ENCODE measurements at regions of chr2 and their contacts with region 1.

Region 1: GRCh38 chr2:37005118-37005868 is 39.0 kb upstream of the STRN start:
- DNase-seq: peak; percentile 23
- ATAC-seq: no peak
- H3K4me3 ChIP-seq: no peak overlapping the region
- H3K27ac ChIP-seq: no peak overlapping the region
- H3K4me1 ChIP-seq: peaks cover 2% of the 10 kb centered on the region; the same call in 1 of the 2 replicates
- H3K27me3 ChIP-seq: no peaks in the 10 kb centered on the region
- CTCF ChIP-seq: 0 out of 2 replicates have a peak, but pooled peaks have one; percentile 21
- POLR2A ChIP-seq: no peak
- RAD21 ChIP-seq: peak; percentile 36

Region 2: DNA sequence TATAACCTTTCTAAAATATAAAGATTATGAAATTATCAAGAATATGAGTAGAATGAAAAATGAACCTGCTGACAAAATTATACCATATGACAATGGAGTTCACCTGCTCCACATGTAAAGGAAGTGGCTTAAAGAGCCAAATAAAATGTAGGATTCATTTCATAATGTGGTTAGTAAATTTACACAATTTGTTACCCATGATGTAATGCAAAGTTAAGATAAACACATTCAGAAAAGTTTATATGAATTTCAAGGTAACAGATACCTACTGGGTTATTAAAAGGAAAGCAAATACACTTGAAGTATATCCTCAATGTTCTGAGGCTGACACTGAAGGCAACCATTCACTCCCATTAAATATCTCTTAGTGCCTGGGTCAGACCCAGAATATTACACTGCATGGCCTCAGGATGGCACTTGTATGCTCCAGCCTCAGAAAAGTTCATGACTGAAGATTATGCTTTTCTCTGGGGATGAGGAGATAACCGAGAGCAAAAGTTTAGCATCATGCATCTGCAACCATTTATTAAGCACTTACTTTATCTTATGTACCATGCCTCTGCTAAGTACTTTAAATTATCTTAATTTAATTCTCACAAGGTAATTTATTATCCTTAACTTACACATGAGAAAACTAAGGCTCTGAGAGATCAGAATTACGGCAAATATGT is 45.2 kb before region 1 on chr2:
- CTCF ChIA-PET with region 1: no interaction called
- POLR2A ChIA-PET with region 1: interaction called, 12 read pairs
- dilution Hi-C with region 1: no loop called
- in situ Hi-C with region 1: no loop called
- intact Hi-C with region 1: no loop called
- DNase-seq: no peak
- ATAC-seq: peak; percentile 57
- H3K4me3 ChIP-seq: no peak overlapping the region
- H3K27ac ChIP-seq: no peak overlapping the region
- H3K4me1 ChIP-seq: peaks cover 5% of the 10 kb centered on the region
- H3K27me3 ChIP-seq: no peaks in the 10 kb centered on the region
- CTCF ChIP-seq: no peak
- POLR2A ChIP-seq: no peak
- RAD21 ChIP-seq: no peak

Measured in IMR-90 (cell line).